GM10248 (cell line): ENCODE measurements at regions of chr12 and their contacts with region 1.

Region 1: GRCh38 chr12:121888478-121889266 is at the start of gene PSMD9:
- DNase-seq: peak; percentile 99
- CTCF ChIP-seq: peak; percentile 66

Region 2: DNA sequence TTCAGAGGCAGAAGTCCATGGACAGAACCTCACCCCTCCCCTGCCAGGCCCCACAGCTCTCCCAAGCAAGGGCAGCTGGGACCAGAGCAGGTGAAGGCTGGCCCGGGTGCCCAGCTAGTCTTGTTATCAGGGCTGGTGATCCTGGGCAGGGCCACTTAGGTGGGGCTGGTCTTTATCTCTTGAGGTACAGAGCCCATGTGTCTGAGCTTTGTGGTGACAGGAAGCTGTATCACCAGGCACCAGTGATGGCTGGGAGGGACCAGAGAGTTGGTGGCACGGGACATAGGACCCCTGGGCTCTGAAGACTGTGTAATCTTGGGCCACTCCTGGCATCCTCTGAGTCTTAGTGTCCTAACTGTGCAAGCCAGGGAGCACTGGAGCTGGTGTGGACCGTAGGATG is 17.2 kb before region 1 on chr12:
- CTCF ChIA-PET with region 1: interaction called, 15 read pairs
- POLR2A ChIA-PET with region 1: no interaction called
- DNase-seq: no peak
- CTCF ChIP-seq: no peak